Dorsolateral prefrontal cortex (tissue), 120 donors: ENCODE measurements at regions of chr13 and their contacts with region 1.

Region 1: GRCh38 chr13:32581177-32581786 is 5.0 kb upstream of the PDS5B start:
- DNase-seq: no peak
- H3K4me3 ChIP-seq: no peak overlapping the region
- H3K27ac ChIP-seq: no peak overlapping the region
- H3K27me3 ChIP-seq: no peaks in the 10 kb centered on the region
- CTCF ChIP-seq: peak; percentile 42 to 84 (median 68)

Region 2: DNA sequence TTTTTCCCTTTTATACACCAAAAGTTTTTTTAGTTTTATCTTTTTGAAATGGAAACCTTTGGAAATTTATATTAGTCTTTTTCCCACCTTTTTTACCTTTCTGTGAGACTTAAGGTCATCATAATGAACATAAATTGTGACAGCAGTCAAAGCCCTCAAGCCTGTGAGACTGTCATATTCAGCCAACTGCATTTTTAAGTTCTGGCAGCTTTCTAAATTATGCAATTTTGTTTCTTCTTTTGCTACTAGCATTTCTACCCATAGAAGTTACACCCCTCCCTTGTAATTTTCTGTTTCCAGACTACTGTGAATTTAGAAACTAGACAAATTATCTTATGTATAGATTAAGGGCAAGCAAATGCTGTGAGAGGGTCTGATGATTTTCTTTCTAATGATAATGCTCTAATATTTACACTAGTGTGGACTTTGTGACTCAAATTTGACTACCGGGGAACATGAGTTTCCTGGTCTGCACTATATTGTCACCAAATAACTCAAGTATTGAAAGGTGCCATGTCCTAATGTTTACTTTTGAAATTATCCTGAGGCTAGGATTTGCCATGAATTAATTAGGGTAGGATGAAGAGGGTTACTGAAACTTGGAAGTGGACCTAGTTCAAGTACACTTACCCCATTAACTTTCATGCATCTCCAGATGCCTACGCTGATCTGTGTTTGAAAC is 506.0 kb before region 1 on chr13:
- intact Hi-C with region 1: no loop called
- DNase-seq: no peak
- H3K4me3 ChIP-seq: no peak overlapping the region
- H3K27ac ChIP-seq: no peak overlapping the region
- H3K27me3 ChIP-seq: no peaks in the 10 kb centered on the region
- CTCF ChIP-seq: no peak

Region 3: GRCh38 chr13:32446773-32447465 is 134.4 kb before region 1 on chr13:
- intact Hi-C with region 1: loop called in 1 of 2 experiments (anchors 5 kb)
- DNase-seq: no peak
- H3K4me3 ChIP-seq: no peak overlapping the region
- H3K27ac ChIP-seq: peak overlapping the region in 1 of 59 donors; percentile 4
- H3K27me3 ChIP-seq: no peaks in the 10 kb centered on the region
- CTCF ChIP-seq: no peak